Pancreas (tissue), 10 donors: ENCODE measurements at regions of chr6 and their contacts with region 1.

Region 1: DNA sequence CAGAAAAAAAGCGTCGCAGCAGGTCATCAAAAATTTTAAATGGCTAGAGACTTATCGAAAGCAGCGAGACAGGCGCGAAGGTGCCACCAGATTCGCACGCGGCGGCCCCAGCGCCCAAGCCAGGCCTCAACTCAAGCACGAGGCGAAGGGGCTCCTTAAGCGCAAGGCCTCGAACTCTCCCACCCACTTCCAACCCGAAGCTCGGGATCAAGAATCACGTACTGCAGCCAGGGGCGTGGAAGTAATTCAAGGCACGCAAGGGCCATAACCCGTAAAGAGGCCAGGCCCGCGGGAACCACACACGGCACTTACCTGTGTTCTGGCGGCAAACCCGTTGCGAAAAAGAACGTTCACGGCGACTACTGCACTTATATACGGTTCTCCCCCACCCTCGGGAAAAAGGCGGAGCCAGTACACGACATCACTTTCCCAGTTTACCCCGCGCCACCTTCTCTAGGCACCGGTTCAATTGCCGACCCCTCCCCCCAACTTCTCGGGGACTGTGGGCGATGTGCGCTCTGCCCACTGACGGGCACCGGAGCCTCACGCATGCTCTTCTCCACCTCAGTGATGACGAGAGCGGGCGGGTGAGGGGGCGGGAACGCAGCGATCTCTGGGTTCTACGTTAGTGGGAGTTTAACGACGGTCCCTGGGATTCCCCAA is at the start of gene EEF1A1:
- DNase-seq: peak; percentile 96 to 100 (median 100)
- ATAC-seq: peak; percentile 83 to 89 (median 84)
- H3K4me3 ChIP-seq: peak within 1 kb of the TSS; percentile 64 to 85 (median 73)
- H3K27ac ChIP-seq: peak within 1 kb of the TSS; percentile 98 to 99 (median 98)
- H3K4me1 ChIP-seq: peaks cover 9 to 26% (median 15%) of the 10 kb centered on the region in 3 donors
- H3K27me3 ChIP-seq: no peaks in the 10 kb centered on the region
- CTCF ChIP-seq: no peak
- total RNA-seq, gene EEF1A1: 5,266 to 10,343 (median 8,842) TPM

Region 2: DNA sequence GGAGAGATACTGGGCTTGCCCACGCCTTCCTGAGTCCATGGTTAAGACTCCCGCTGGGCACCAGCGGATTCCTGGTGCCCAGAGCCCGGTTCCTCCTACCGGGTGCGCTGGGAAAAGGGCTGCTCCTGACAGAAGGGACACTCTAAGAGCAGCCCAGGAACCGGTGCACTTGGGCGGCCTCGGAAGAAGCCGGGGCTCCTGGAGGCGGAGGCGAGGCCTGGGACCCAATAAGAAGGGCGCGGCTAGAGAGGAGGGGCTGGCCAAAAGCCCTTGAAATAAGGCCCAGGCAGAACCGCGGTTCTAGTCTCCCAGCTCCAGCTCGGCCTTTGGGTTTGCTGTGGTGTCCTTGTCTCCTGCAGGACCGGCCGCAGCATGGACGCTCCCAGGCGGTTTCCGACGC is 158.5 kb before region 1 on chr6 and contains the start of gene KHDC3L:
- intact Hi-C with region 1: no loop called
- DNase-seq: no peak
- ATAC-seq: no peak
- H3K4me3 ChIP-seq: no peak within 1 kb of the TSS
- H3K27ac ChIP-seq: no peak within 1 kb of the TSS
- H3K4me1 ChIP-seq: no peaks in the 10 kb centered on the region
- H3K27me3 ChIP-seq: no peaks in the 10 kb centered on the region
- CTCF ChIP-seq: no peak
- total RNA-seq, gene KHDC3L: not detected

Region 3: GRCh38 chr6:73443555-73443954 is 77.3 kb before region 1 on chr6:
- intact Hi-C with region 1: no loop called
- DNase-seq: no peak
- ATAC-seq: no peak
- H3K4me3 ChIP-seq: no peak overlapping the region
- H3K27ac ChIP-seq: no peak overlapping the region
- H3K4me1 ChIP-seq: no peaks in the 10 kb centered on the region
- H3K27me3 ChIP-seq: no peaks in the 10 kb centered on the region
- CTCF ChIP-seq: no peak

Region 4: DNA sequence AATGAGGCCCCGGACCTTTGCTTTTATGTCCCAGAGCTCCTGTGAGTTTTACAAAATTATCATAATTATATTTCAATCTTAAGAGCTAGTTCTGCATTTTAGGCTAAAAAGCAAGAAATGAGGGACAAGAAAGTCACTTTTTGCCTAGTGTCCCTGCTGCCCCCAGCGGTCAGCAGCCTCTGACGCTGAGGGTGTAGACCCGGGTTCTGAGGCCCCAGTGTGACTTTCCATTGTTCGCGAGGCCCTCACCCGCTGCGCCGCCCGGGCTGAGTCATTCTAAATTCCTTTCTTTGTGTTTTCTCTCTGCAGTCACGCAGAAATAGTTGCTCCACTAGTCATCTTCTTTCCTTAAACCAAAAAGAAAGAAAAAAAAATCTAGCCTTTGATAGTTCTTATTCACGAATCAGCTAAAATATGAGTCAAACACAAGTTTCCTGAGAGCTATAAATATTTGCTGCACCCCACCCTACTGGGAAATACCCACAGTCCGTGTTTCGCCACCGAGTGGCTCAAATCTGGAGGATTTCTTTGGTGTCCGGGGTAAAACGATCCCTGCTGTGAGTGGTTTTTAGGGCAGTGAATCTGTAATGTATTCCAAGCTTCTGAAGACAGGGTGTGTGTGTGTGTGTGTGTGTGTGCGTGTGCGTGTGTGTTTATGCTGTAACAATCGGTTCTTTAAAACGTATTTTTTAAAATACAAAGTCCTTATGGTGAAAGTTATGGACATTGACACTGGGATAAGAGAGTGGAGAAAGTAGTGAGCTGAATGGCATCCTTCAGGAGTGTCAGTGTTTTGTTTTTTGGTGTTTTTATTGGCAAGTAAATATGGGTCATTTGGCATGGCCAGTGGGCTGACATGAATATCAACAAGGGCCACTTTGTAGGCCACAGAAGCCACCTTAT is 59.7 kb after region 1 on chr6:
- intact Hi-C with region 1: loop called in 1 of 3 experiments (anchors 10 kb)
- DNase-seq: peak in 5 of 6 donors; percentile 41 to 65 (median 45)
- ATAC-seq: peak; percentile 76 to 90 (median 84)
- H3K4me3 ChIP-seq: peak overlapping the region in 1 of 4 donors; percentile 4
- H3K27ac ChIP-seq: peak overlapping the region; percentile 55 to 85 (median 68)
- H3K4me1 ChIP-seq: peaks cover 0 to 9% (median 4%) of the 10 kb centered on the region in 3 donors
- H3K27me3 ChIP-seq: no peaks in the 10 kb centered on the region
- CTCF ChIP-seq: no peak

Region 5: GRCh38 chr6:73610444-73611275 is 89.8 kb after region 1 on chr6:
- intact Hi-C with region 1: loop called in 1 of 3 experiments (anchors 5 kb)
- DNase-seq: no peak
- ATAC-seq: peak; percentile 69 to 90 (median 86)
- H3K4me3 ChIP-seq: no peak overlapping the region
- H3K27ac ChIP-seq: no peak overlapping the region
- H3K4me1 ChIP-seq: no peaks in the 10 kb centered on the region
- H3K27me3 ChIP-seq: no peaks in the 10 kb centered on the region
- CTCF ChIP-seq: peak; percentile 18 to 56 (median 52)